OCI-LY7 (cell line): ENCODE measurements at regions of chr7 and their contacts with region 1.

Region 1: DNA sequence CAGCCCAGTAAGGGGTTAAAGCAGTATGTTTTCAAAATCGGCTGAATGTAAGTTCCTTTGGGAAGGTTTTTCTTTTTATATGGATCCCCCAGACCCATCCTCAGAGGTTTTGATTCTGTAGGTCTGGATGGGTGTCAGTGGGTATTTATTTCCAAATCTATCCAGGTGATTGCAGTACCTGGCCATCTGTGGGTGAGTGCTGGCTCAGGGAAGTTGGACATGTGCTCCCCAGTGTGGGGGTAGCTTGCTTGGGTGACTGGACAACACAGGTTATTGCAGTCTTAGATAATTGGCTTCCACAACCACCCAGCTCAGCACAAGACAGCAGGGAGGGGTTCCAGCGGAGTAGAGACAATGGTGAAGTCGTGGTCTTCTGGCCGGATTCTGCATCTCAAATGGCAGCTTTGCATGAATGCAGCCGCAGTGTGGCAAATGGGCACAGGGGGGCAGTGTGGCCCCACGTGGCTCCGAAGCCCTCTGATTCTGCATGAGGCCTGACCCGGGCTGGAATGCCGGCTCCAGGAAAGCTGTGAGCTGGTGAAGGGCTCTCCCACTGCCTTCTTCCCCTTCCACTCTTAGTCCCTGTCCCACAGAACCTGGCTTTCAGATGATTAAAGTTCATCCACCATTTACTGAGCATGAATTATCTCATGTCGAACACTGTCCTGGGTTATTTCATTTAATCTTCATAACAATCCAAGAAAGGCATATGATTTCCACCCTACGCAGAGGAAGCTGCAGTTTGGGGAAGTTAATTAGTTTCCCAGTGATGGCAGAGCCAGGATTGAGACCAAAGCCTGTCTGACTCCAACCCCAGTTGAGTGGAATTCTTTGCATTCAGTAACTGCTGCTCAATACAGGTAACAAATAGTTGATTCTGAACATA is 64.5 kb upstream of the SYPL1 start:
- DNase-seq: peak; percentile 78
- H3K4me3 ChIP-seq: no peak overlapping the region
- H3K27ac ChIP-seq: peak overlapping the region; percentile 43
- H3K4me1 ChIP-seq: peaks cover 49% of the 10 kb centered on the region
- CTCF ChIP-seq: peak; percentile 98

Region 2: DNA sequence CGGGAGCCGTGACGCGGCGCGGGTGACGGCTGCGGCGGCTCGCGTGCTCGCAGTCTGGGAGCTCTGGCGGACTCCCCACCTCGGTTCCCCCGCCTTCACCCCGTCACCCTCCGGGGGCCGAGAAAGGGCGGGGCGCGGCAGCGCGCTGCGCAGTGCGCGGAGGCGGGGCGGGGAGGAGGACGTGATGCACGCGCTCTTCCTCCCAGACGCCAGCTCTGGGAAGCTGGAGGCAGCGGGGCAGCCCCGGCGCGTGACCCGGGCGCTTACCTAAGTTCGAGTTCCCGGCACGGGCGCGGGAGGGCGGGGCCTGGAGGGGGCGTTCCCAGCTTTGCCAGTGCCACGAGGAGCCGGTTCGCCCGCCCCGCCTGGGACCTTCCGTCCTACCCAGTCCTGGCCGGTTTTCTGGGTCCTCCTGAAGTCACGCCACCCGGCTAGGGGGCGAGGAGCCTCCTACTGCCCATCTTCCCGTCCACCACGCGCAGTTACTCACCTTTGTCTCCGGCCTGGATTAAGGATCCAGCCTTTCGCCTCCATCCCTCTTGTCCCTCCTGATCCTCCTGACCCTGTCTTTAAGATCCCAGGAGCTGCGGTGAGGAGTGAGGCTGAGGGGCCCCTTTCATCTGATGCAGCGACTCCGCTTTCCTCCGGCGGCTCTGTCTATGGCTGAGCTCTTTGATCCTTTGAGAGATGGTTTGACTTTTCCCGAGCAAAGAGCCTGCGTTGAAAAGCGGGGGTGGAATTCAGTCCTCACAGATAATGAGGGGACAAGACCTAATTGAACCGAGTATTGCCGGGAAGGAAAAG is 108.6 kb after region 1 on chr7:
- CTCF ChIA-PET with region 1: interaction called, 6 read pairs
- POLR2A ChIA-PET with region 1: interaction called, 5 read pairs
- intact Hi-C with region 1: loop called (anchors 1 kb)
- DNase-seq: peak; percentile 95
- H3K4me3 ChIP-seq: peak overlapping the region; percentile 90
- H3K27ac ChIP-seq: peak overlapping the region; percentile 61
- H3K4me1 ChIP-seq: peaks cover 23% of the 10 kb centered on the region
- CTCF ChIP-seq: no peak

Region 3: GRCh38 chr7:106367018-106367420 is 190.4 kb after region 1 on chr7:
- CTCF ChIA-PET with region 1: no interaction called
- POLR2A ChIA-PET with region 1: no interaction called
- intact Hi-C with region 1: loop called (anchors 1 kb)
- DNase-seq: peak; percentile 31
- H3K4me3 ChIP-seq: no peak overlapping the region
- H3K27ac ChIP-seq: no peak overlapping the region
- H3K4me1 ChIP-seq: no peaks in the 10 kb centered on the region
- CTCF ChIP-seq: peak; percentile 62

Region 4: DNA sequence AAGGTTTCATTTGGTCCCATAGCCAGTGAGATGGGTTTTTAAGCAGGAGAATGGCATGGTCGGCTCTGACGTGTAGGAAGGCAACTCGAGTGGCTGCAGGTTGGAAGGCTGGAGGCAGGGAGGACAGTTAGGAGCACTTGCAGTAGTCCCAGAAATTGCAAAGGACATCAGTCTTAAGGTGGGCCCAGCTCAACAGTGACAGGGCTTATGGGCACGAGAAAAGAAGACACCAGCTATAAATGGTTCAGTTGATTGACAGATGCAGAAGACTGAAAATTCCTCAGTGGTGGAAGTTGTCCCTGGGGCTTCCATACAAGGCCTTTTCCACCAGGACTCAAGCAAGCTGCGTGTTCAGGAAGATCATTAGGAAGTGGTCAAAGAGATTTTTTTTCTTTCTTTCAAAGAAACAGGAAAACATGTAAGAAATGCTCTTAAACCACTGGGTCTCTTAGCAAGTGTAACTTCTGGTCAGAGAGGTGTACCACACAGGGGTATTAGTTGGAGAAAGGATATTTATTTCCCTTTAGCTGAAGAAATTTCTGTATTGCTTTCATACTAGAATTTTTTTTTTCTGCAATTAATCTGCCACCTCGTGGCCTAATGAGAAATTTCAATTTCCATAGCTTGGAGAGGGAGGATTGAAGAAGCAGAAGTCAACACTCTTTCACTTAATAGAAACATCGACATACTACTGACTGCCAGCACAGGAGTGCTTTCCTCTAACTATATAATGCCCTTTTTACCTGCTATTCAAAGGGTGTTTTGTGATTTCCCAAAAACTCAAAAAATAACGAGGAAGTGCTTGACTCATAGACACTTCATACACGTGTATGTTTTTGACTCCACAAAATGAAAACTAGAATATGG is 285.6 kb after region 1 on chr7:
- CTCF ChIA-PET with region 1: interaction called, 32 read pairs
- POLR2A ChIA-PET with region 1: interaction called, 14 read pairs
- intact Hi-C with region 1: loop called (anchors 1 kb)
- DNase-seq: peak; percentile 39
- H3K4me3 ChIP-seq: no peak overlapping the region
- H3K27ac ChIP-seq: no peak overlapping the region
- H3K4me1 ChIP-seq: no peaks in the 10 kb centered on the region
- CTCF ChIP-seq: peak; percentile 83

Region 5: GRCh38 chr7:106542550-106543220 is 366.0 kb after region 1 on chr7:
- CTCF ChIA-PET with region 1: no interaction called
- POLR2A ChIA-PET with region 1: no interaction called
- intact Hi-C with region 1: loop called (anchors 5 kb)
- DNase-seq: peak; percentile 51
- H3K4me3 ChIP-seq: no peak overlapping the region
- H3K27ac ChIP-seq: no peak overlapping the region
- H3K4me1 ChIP-seq: no peaks in the 10 kb centered on the region
- CTCF ChIP-seq: peak; percentile 80

Region 6: DNA sequence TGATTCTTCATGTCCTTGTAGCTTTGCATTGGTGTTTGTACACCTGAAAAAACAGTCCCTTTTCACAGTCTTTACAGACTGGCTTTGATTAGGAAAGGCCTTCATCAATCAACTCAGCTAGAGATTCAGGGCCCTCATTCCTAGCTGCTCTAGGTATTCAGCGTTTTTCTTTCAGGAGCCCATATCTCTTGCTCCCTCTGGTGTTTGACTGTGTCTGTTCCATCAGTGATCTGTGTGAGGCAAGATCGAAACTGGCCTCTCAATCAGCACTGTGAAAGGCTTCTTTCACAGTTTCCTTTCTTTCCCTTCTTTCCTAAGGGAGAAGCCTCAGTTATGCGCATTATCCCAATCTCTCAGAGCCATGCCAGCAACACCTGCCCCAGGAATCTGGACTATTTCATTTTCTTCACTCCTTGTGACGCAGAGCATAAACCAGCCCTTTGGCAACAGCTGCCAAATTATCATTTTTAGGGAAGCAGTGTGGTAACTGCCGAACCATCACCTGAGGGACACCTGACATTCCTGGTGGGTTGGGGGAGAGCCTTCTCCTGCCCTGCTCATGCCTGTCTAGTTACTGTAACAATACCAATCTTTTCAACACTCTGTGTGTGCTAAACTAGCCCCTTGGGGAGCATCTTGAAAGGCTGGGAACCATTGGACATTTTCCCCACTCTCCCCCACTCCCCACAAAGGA is 560.0 kb after region 1 on chr7:
- CTCF ChIA-PET with region 1: no interaction called
- POLR2A ChIA-PET with region 1: no interaction called
- intact Hi-C with region 1: loop called (anchors 1 kb)
- DNase-seq: peak; percentile 57
- H3K4me3 ChIP-seq: no peak overlapping the region
- H3K27ac ChIP-seq: no peak overlapping the region
- H3K4me1 ChIP-seq: peaks cover 5% of the 10 kb centered on the region
- CTCF ChIP-seq: peak; percentile 74